ENCODE measurements at regions of chr3 and their contacts with region 1.

Region 1: DNA sequence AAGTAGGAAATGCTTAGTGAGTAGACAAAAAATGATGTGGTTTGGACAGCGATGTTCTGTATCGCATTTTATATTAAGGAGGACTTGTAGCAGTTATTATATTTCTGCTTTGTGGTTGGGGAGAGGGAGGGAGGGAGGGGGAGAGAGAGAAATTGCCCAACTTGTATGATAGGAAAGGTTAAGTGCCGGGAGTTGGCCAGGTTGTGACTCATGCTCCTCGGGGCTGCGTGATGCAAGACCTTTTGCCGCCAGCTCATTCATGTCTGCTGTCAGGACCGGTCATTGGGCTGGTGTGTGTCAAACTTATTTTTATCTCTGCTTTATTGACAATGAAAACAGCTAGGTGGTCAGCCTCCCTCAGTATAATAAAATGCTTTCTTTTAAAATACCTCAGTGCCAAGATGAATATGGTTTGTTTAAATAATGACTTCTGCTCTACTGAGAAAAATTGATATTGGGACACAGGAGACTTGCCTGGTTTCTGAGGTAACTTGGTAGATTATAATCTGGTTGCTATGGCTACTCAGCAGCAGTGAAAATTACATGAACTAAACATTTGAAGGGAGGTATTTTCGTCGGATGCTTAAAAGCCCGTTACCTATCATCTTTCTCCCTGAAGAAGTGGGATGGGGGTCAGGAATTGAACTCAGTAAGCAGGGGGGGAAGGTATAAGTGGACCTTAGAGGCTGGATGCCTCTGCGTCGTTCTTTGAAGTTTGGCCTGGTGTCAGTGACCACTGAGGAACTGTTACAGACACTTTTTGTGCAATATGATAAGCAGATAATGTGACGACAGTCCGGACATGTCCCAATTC is 90.7 kb downstream of the FNDC3B start:
- DNase-seq: peak in 2 of 10 donors; percentile 21 to 32
- H3K4me3 ChIP-seq: no peak overlapping the region
- H3K27ac ChIP-seq: peak overlapping the region in 2 of 59 donors; percentile 31 to 45
- H3K27me3 ChIP-seq: no peaks in the 10 kb centered on the region
- CTCF ChIP-seq: no peak

Region 2: GRCh38 chr3:172082269-172082668 is 47.8 kb before region 1 on chr3:
- intact Hi-C with region 1: no loop called
- DNase-seq: no peak
- H3K4me3 ChIP-seq: peak overlapping the region in 4 of 59 donors; percentile 3 to 43 (median 16)
- H3K27ac ChIP-seq: peak overlapping the region in 2 of 59 donors; percentile 10 to 27
- H3K27me3 ChIP-seq: no peaks in the 10 kb centered on the region
- CTCF ChIP-seq: no peak

Region 3: DNA sequence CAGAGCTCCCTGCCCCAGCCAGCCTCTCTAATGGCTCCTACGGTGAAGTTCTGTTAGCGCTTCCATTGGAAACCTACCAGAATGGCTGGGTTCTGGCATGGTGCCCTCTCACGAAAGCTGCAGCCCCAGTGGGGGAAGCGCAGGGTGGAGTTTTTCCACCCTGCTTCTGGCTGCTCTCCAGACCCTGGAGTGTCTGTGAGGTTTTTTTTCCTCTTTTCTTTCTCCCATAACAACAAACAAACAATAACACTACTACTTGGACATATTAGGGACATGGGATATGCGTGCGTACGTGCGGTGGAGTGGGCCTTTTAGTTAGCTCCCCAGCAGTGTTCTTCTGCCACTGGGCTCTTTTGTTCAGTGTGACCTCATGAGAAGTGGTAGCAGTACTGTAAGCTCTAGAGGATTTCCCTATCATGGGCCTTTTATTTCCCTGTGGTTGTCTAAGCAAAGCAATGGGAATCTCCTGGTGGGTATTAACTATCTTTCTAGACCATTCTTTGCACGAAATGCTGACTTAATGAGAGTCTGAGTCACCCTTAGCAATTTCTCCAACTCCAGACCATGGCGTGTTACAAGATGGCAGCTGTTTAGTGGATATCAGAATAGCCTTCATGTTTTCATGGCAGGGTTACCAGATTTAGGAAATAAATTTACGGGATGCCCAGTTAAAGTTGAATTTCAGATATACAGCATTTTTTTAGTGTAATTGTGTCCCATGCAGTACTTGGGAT is 71.2 kb after region 1 on chr3:
- intact Hi-C with region 1: loop called in 1 of 2 experiments (anchors 5 kb)
- DNase-seq: peak in 1 of 10 donors; percentile 65
- H3K4me3 ChIP-seq: peak overlapping the region in 1 of 59 donors; percentile 2
- H3K27ac ChIP-seq: peak overlapping the region in 3 of 59 donors; percentile 4 to 29 (median 18)
- H3K27me3 ChIP-seq: peaks cover 0 to 9% (median 0%) of the 10 kb centered on the region in 45 donors
- CTCF ChIP-seq: no peak

Measured in dorsolateral prefrontal cortex (tissue), 120 donors.